HEK293T (cell line): ENCODE measurements at regions of chr1 and their contacts with region 1.

Region 1: GRCh38 chr1:228500901-228501871 is 14.0 kb downstream of the RNF187 start:
- DNase-seq: peak; percentile 91

Region 2: GRCh38 chr1:228513236-228513900 is 12.2 kb after region 1 on chr1:
- CTCF ChIA-PET with region 1: interaction called, 10 read pairs
- POLR2A ChIA-PET with region 1: no interaction called
- DNase-seq: peak; percentile 4